ENCODE measurements at regions of chr7 and their contacts with region 1.

Region 1: DNA sequence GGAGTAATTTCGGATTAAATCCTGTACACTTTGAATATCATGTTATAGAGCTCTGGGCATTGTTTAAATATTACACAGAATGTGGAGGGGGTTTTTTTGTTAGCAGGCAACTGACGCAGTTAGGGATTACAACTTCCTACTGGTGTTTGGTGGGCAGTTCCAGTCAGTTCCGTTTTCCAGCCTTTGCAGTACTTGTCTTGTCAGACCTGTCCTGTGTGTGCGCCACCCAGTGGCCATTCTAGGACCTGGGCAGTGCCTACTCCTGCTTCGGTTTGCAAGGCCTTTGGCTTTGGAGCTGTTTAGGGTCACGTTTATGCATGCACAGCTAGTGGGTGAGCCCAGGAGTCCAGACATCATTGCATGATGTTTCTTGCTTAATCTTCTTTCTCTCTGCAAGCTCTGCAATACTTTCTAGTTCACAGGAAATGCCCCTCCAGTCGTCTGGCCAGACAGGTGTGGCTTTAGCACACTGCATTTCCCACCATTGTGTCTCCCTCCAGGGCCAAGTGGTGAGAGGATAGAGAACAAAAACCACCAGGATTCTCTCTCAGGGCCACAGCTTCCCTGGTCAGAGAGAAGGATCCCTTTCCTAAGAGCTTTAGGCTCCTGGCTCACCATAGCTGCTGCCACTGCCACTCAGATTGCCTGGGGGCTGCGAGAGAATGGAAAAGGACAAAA is 96.5 kb upstream of the TARP start:
- DNase-seq: peak; percentile 87
- ATAC-seq: peak; percentile 81
- H3K4me3 Mint-ChIP-seq: peak overlapping the region; percentile 13
- H3K27ac Mint-ChIP-seq: peak overlapping the region; percentile 70
- H3K4me1 Mint-ChIP-seq: peaks cover 54% of the 10 kb centered on the region
- H3K27me3 Mint-ChIP-seq: no peaks in the 10 kb centered on the region

Region 2: DNA sequence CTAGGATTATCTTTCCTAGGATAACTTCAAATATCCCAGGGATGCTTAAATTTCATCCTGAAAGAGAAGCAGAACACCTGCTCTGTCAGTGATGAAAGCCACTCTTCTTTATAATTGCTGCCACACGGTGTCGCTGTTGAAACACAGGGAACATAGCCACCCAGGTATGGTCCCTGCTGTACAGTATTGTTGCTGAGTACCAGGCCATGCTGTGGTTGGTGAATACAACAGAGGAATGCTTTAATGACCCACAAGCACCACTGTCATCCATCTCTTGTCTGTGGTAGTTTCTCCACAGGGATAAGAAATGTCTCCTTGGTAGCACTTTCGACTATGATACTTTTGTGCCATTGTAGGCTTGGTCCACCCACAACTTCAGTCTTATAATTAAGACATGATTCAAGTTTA is 262.5 kb before region 1 on chr7:
- CTCF ChIA-PET with region 1: interaction called, 58 read pairs
- POLR2A ChIA-PET with region 1: no interaction called
- DNase-seq: peak; percentile 78
- ATAC-seq: peak; percentile 88
- H3K4me3 Mint-ChIP-seq: no peak overlapping the region
- H3K27ac Mint-ChIP-seq: no peak overlapping the region
- H3K4me1 Mint-ChIP-seq: no peaks in the 10 kb centered on the region
- H3K27me3 Mint-ChIP-seq: peaks cover 27% of the 10 kb centered on the region

Region 3: DNA sequence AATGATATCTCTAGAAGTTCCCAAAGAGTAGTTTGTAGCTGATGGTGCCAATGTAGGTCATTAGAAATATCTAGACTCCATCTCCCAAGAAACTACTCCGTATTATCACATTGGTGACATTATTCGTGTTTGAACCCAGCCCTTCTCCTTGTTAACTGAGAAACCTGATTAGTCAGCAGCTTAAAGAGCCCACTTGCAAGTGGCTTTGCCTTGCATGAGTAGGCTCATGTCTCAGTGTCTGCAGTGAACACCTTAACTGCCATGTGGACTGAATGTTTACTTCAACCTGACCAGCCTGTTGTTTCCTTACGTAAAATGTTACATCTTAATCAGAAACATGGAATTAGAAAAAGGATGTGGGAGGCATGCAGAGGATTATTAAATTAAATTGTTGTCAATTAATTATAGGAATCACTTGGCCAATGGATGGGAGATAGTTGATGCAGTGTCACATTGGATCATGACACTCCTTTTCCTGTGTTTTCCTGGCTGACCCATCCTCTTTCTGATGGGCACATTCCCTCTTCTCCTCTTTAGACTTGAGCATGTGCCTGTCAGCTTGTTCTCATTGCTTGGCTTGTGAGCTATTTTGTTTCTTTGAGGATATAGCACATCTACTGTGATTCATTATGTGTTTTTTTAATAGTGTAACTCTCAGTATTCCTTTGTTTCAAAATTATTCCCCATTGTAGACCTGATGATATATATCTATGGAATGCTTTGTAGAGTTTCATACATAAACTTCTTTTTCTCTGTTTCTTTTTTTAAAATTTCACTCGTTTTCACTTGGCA is 174.0 kb before region 1 on chr7:
- CTCF ChIA-PET with region 1: interaction called, 11 read pairs
- POLR2A ChIA-PET with region 1: no interaction called
- DNase-seq: no peak
- ATAC-seq: no peak
- H3K4me3 Mint-ChIP-seq: no peak overlapping the region
- H3K27ac Mint-ChIP-seq: no peak overlapping the region
- H3K4me1 Mint-ChIP-seq: peaks cover 15% of the 10 kb centered on the region
- H3K27me3 Mint-ChIP-seq: no peaks in the 10 kb centered on the region

Region 4: GRCh38 chr7:38232502-38233366 is 137.2 kb before region 1 on chr7:
- CTCF ChIA-PET with region 1: interaction called, 30 read pairs
- POLR2A ChIA-PET with region 1: no interaction called
- DNase-seq: peak; percentile 90
- ATAC-seq: peak; percentile 89
- H3K4me3 Mint-ChIP-seq: peak overlapping the region; percentile 62
- H3K27ac Mint-ChIP-seq: peak overlapping the region; percentile 95
- H3K4me1 Mint-ChIP-seq: peaks cover 94% of the 10 kb centered on the region
- H3K27me3 Mint-ChIP-seq: no peaks in the 10 kb centered on the region

Region 5: DNA sequence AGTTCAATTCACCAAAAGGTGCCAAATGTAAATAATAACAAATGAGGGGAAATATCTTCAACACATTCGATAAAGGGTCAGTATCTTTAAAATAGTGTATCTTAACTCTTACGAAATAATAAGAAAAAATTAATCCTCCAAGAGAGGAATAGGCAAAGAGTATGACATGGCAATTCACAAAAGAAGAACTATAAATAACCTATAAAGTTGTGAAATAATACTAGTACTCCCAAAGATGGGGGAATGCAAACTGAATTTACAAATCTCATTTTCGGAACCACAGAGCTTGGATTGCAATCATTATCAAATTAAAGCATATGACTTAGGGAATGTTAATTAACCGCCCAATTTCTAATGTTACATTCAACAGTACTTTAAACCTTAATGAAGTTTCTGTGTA is 18.4 kb before region 1 on chr7:
- CTCF ChIA-PET with region 1: interaction called, 65 read pairs
- POLR2A ChIA-PET with region 1: no interaction called
- DNase-seq: no peak
- ATAC-seq: no peak
- H3K4me3 Mint-ChIP-seq: peak overlapping the region; percentile 87
- H3K27ac Mint-ChIP-seq: peak overlapping the region; percentile 92
- H3K4me1 Mint-ChIP-seq: peaks cover 50% of the 10 kb centered on the region
- H3K27me3 Mint-ChIP-seq: no peaks in the 10 kb centered on the region

Region 6: DNA sequence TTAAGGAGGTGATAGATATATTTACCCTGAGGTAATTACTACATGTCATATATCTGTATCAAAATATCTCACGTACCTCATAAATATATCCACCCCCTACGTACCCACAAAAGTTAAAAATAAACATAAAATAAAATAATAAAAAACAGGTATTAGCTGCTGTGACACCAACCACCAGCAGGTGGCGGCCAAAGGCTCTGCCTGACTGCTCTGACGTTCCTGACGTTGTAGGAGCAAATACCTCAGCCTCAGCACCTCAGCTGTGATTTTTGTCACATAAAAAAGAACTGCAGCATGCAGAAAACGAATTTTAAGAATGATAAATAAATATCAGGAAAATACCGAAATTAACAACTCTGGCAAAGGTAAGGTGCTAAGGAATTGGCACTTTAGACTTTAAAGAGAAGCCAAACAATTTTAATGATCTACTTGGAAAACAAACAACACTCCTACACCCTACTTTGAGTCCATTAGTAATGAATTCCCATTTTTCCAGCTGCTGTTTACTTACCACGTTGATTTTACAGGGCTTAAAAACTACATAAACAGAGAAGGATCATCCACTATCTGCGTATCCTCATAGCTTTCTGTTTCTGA is 28.9 kb after region 1 on chr7:
- CTCF ChIA-PET with region 1: interaction called, 10 read pairs
- POLR2A ChIA-PET with region 1: no interaction called
- DNase-seq: peak; percentile 61
- ATAC-seq: peak; percentile 58
- H3K4me3 Mint-ChIP-seq: no peak overlapping the region
- H3K27ac Mint-ChIP-seq: no peak overlapping the region
- H3K4me1 Mint-ChIP-seq: no peaks in the 10 kb centered on the region
- H3K27me3 Mint-ChIP-seq: peaks cover 11% of the 10 kb centered on the region

Measured in activated CD8-positive, alpha-beta T cell treated with anti-CD3 and anti-CD28 coated beads, Interleukin-2, amount 10 ng/mL, durations not matched to agents 7 days and 5 days (primary cell).